ENCODE measurements at regions of chr6 and their contacts with region 1.

Region 1: DNA sequence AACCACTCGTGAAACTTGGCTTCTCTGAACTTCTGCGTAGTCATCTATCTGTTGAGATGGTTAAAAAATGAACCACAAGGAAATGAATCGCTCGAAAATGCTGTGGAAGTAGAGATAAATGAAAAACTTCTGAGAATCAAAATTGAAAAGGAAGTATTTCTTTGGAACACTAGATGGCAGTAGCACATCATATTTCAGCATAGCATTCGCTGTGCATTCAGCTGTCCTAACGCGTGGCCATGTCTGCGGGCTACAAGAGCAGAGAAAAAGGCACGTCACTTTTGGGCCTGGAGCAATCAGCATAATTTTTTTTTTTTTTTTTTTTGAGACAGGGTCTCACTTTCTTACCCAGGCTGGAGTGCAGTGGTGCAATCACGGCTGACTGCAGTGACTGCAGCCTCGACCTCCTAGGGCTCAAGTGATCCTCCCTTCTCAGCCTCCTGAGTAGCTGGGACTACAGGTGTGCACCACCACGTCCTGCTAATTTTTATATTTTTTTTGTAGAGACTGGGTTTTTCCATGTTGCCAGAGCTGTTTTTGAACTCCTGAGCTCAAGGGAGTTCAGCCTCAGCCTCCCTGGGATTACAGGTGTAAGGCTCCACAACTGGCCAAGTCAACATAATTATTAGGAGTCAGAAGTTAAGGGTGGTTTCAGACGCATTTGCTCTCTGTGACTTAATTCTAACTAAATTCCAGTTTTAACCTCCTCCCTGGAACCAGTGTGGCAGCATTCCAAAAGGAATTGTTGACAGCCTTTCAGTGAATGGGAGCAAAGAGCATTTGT is 8.8 kb upstream of the PERP start:
- DNase-seq: peak; percentile 31 to 76 (median 61)
- H3K4me3 ChIP-seq: peak overlapping the region in 1 of 59 donors; percentile 7
- H3K27ac ChIP-seq: no peak overlapping the region
- H3K27me3 ChIP-seq: peaks cover 0 to 10% (median 0%) of the 10 kb centered on the region in 45 donors
- CTCF ChIP-seq: peak; percentile 69 to 98 (median 86)

Region 2: GRCh38 chr6:138205437-138206094 is 89.5 kb after region 1 on chr6:
- intact Hi-C with region 1: loop called (anchors 2 to 5 kb)
- DNase-seq: no peak
- H3K4me3 ChIP-seq: peak overlapping the region in 4 of 59 donors; percentile 3 to 17 (median 10)
- H3K27ac ChIP-seq: peak overlapping the region in 58 of 59 donors; percentile 13 to 90 (median 70)
- H3K27me3 ChIP-seq: no peaks in the 10 kb centered on the region
- CTCF ChIP-seq: no peak

Region 3: DNA sequence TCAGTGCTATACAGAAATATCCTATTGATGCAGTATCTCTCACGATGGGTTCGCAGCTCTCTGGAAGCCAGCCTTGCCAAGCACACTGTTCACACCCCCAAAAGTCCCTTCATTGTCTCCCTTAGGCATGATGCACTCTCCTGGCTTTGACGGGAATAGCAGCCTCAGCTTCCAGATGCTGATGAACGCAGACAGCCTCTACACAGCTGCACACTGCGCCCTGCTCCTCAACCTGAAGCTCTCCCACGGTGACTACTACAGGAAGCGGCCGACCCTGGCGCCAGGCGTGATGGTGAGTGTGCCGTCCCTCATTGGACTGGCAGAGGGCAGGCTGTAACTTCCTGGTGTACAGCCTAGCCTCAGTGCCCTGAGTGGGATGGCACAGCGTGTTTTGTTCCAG is 162.3 kb after region 1 on chr6:
- intact Hi-C with region 1: loop called (anchors 1 to 5 kb)
- DNase-seq: peak in 9 of 10 donors; percentile 45 to 78 (median 71)
- H3K4me3 ChIP-seq: no peak overlapping the region
- H3K27ac ChIP-seq: peak overlapping the region in 47 of 59 donors; percentile 2 to 77 (median 54)
- H3K27me3 ChIP-seq: no peaks in the 10 kb centered on the region
- CTCF ChIP-seq: peak in 54 of 56 donors; percentile 31 to 79 (median 62)

Region 4: GRCh38 chr6:138403801-138404661 is 288.0 kb after region 1 on chr6 and contains the start of gene HEBP2:
- intact Hi-C with region 1: loop called (anchors 5 to 10 kb)
- DNase-seq: peak; percentile 53 to 93 (median 73)
- H3K4me3 ChIP-seq: peak within 1 kb of the TSS; percentile 58 to 95 (median 81)
- H3K27ac ChIP-seq: peak within 1 kb of the TSS in 58 of 59 donors; percentile 43 to 93 (median 83)
- H3K27me3 ChIP-seq: no peaks in the 10 kb centered on the region
- CTCF ChIP-seq: peak in 54 of 56 donors; percentile 20 to 82 (median 60)
- total RNA-seq, gene HEBP2: 8.3 to 29.9 (median 17.4) TPM

Region 5: DNA sequence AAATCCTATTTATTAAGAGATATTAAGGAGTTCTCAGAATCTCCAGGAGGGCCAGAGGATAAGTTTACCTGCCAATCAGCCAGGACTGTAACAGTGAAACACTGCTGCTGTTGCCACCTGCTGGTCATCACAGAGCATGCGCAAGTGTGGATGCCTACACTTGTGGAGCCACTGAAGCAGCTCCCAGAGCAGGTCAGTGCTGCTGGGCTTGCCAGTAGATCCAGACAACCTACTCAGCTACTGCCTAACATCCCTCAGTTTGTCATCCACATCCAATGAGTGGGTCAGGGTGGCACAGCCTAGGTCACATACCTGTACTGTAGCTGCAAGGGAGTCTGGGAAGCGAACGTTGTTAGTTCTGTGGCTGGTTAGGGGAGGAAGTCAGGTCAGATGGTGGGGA is 401.6 kb after region 1 on chr6:
- intact Hi-C with region 1: loop called (anchors 5 to 10 kb)
- DNase-seq: peak in 6 of 10 donors; percentile 22 to 52 (median 36)
- H3K4me3 ChIP-seq: no peak overlapping the region
- H3K27ac ChIP-seq: no peak overlapping the region
- H3K27me3 ChIP-seq: peaks cover 0 to 40% (median 0%) of the 10 kb centered on the region in 45 donors
- CTCF ChIP-seq: peak in 53 of 56 donors; percentile 18 to 67 (median 51)

Region 6: DNA sequence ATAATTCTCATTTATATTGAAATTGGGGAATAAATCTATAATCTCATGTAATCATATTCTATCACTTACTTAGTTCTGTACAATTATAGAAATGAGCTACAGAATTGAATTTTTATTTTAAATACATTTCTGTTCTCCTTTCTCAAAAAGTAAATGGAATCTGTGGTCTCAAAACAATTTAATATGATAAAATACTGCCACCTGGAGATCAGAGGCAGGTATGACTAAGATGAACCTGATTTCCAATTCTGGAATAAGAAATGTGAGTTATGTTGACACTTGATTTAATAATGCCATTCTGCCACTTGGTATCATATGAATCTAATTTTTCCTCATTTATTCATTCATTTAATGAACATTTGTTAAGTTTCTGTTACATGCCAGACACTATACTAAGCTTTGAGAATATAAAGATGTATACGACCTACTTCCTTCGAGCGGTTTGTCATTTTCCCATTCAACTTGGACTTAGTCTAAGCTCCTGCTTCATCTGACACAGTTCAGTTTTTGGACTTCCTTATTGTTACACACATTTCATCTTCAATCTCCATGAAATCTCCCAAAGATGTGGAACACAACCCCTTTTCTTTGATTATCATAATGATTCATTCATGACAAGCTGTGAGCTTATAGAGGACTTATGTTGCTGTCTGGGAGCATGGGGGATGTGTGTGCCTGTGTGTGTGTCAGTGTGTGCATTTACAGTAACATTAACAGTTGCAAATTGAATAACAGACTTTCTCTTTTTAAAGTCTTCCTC is 650.0 kb after region 1 on chr6:
- intact Hi-C with region 1: loop called in 1 of 2 experiments (anchors 10 kb)
- DNase-seq: no peak
- H3K4me3 ChIP-seq: no peak overlapping the region
- H3K27ac ChIP-seq: no peak overlapping the region
- H3K27me3 ChIP-seq: no peaks in the 10 kb centered on the region
- CTCF ChIP-seq: peak; percentile 47 to 88 (median 74)